Stomach (tissue), 19 donors: ENCODE measurements at regions of chr4 and their contacts with region 1.

Region 1: DNA sequence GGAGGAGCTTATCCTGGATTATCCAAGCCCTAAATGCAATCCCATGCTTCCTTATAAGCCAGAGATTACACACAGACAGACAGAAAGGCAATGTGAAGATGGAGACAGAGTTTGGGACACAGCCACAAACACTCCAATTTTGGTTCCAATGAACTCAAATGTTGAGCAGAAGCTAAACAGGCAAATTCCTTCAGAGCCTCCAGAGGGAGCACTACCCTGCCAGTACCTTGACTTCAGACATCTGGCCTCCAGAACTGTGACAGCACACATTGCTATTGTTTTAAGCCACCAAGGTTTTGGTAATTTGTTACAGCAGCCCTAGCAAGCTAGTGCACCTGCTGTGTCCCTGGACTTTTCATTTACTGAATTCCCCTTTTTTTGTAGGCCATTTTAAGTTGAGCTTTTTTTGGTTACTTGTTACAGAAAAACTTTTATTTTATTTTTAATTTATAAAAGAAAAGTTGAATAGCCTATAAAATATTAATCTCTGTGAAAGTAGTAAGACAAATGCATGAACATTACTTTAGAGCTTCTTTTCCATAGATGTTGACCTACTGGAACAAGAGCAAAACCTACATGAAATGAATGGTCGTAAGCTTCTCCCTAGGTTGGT is 33.4 kb upstream of the SRD5A3 start:
- DNase-seq: peak; percentile 34 to 66
- H3K4me3 ChIP-seq: no peak overlapping the region
- H3K27ac ChIP-seq: no peak overlapping the region
- H3K4me1 ChIP-seq: no peaks in the 10 kb centered on the region
- H3K27me3 ChIP-seq: no peaks in the 10 kb centered on the region
- CTCF ChIP-seq: peak in 5 of 7 experiments; percentile 32 to 49 (median 41)
- EP300 ChIP-seq: no peak
- POLR2A ChIP-seq: no peak

Region 2: GRCh38 chr4:54971474-54971950 is 341.1 kb before region 1 on chr4:
- intact Hi-C with region 1: loop called (anchors 10 kb)
- DNase-seq: peak in 1 of 2 donors; percentile 76
- H3K4me3 ChIP-seq: no peak overlapping the region
- H3K27ac ChIP-seq: no peak overlapping the region
- H3K4me1 ChIP-seq: no peaks in the 10 kb centered on the region
- H3K27me3 ChIP-seq: no peaks in the 10 kb centered on the region
- CTCF ChIP-seq: peak in 5 of 7 experiments; percentile 34 to 73 (median 66)
- EP300 ChIP-seq: no peak
- POLR2A ChIP-seq: no peak

Region 3: GRCh38 chr4:55920571-55920970 is 608.0 kb after region 1 on chr4:
- intact Hi-C with region 1: no loop called
- DNase-seq: no peak
- H3K4me3 ChIP-seq: no peak overlapping the region
- H3K27ac ChIP-seq: no peak overlapping the region
- H3K4me1 ChIP-seq: no peaks in the 10 kb centered on the region
- H3K27me3 ChIP-seq: no peaks in the 10 kb centered on the region
- CTCF ChIP-seq: no peak
- EP300 ChIP-seq: no peak
- POLR2A ChIP-seq: no peak